SK-N-SH (cell line): ENCODE measurements at regions of chr21 and their contacts with region 1.

Region 1: DNA sequence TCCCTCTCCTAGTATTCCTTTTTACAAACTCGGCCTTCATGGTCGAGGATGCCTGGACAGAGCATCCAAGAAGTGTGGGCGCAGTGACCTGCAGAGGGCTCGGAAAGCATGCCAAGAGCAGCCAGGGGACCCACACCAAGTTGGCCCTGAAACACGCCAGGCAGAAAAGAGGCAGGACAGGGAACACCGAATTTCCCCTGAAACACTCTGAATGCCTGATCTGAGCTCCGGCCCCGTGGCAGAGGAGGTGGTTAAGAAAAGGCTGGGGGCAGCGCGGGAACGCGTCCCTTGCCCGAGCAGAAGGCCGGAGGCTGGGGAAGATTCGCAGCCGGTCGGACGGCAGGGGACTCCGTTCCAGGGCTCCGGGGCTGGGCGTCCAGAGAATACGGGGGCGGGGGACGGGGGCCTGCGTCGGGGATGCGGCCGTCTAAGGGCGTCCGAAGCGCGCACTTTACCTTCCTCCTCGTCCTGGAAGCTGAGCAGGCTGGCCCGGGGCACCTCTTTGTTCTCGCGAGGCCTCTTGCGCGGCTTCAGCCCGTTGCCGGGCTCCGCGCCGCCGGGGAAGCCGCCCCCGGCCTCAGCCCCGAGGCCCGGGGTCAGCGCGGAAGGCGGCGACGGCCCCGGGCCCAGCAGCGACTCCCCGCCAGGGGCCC is 558 bp downstream of the PAXBP1 start:
- DNase-seq: peak; percentile 80
- H3K4me3 ChIP-seq: peak overlapping the region; percentile 76 to 87
- H3K27ac ChIP-seq: peak overlapping the region; percentile 76 to 80
- H3K4me1 ChIP-seq: peaks cover 0 to 18% of the 10 kb centered on the region in 2 experiments; a peak in 3 of 4 replicates
- H3K27me3 ChIP-seq: no peaks in the 10 kb centered on the region
- CTCF ChIP-seq: peak; percentile 11; the same call in 1 of the 2 replicates
- EP300 ChIP-seq: no peak
- RAD21 ChIP-seq: no peak

Region 2: GRCh38 chr21:32702702-32703101 is 68.3 kb before region 1 on chr21:
- CTCF ChIA-PET with region 1: no interaction called
- POLR2A ChIA-PET with region 1: no interaction called
- DNase-seq: no peak
- H3K4me3 ChIP-seq: no peak overlapping the region
- H3K27ac ChIP-seq: peak overlapping the region; percentile 44 to 48; a peak in 3 of 4 replicates
- H3K4me1 ChIP-seq: peaks cover 6 to 13% of the 10 kb centered on the region in 2 experiments; a peak in 3 of 4 replicates
- H3K27me3 ChIP-seq: no peaks in the 10 kb centered on the region
- CTCF ChIP-seq: no peak
- EP300 ChIP-seq: no peak
- RAD21 ChIP-seq: no peak

Region 3: DNA sequence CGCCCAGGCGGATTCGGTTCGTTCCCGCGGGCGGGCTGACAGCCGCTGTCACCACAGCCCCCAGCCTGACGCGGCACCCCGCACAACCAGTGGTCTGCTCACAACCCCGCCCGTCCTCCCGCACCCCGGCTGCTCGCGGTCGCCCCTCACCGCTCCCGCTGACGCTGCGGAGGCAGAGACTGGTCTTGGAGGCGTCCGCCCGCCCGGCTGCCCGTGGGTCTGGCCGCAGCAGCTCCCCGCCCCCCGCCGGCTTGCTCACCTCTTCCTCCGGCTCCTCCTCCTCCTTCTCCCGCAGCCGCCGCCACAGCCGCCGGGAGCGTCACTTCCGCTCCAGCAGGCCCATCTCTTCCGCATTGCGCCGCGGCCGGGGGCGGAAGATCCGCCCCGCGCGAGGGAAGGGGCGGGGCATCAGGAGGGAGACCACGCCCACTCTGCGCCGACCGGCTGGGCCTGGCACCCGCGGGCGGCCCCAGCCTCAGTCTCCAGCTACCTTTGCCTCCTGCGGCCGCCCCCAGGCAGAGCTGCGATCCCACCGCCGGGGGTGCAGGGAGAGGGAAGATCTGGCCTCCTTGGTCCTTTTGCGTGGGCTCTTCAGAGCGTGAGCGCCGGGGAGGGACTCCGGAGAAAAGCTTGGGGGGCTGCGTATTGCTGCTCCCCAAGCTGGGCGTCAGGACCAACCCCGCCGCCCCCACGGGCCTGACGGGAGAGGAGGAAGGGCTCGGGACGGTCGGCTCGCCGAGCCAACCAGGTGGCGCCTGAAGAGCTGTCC is 43.1 kb before region 1 on chr21 and contains the start of gene SYNJ1:
- CTCF ChIA-PET with region 1: interaction called, 8 read pairs
- POLR2A ChIA-PET with region 1: interaction called, 11 read pairs
- DNase-seq: peak; percentile 97
- H3K4me3 ChIP-seq: peak within 1 kb of the TSS; percentile 83 to 94
- H3K27ac ChIP-seq: peak within 1 kb of the TSS; percentile 81 to 91
- H3K4me1 ChIP-seq: peaks cover 0 to 14% of the 10 kb centered on the region in 2 experiments; a peak in 2 of 4 replicates
- H3K27me3 ChIP-seq: no peaks in the 10 kb centered on the region
- CTCF ChIP-seq: no peak
- EP300 ChIP-seq: no peak
- RAD21 ChIP-seq: no peak
- polyA plus RNA-seq, gene SYNJ1: 3.3 TPM in 2 replicates

Region 4: DNA sequence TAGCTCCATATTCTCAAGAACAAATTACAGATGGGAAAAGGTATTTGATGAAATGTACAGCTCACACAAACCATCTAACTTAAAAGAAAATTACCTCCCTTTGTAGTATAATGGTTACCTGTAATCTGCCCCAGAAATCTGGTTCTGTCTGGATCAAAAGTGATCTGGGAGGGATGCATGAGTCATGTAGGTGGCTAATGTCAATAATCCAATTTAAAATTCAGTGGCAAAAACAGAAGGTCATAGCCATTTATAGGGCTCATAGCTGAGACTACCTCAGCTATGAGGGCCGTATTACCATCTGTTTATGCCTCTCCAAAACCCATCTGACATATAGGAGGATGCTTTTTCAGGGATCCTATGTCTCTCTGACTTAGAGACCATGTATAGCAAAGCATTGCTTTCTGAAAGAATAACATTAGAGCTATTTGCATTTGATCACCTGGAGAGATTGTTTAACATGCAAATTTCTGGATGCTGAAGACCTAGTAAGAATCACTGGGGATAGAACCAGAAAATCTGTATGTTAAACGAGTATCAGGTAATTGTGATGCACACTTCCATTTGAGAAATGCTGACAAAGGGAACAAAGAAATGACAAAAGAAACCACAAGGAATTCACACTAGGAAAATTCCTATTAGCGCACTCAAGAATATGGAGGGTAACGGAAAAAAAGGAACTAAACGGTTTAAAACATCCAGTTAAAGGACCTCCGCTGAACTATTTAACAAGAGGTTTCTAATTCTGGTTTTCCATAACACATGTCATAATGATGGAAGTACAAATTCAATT is 17.0 kb before region 1 on chr21:
- CTCF ChIA-PET with region 1: interaction called, 27 read pairs
- POLR2A ChIA-PET with region 1: no interaction called
- DNase-seq: no peak
- H3K4me3 ChIP-seq: no peak overlapping the region
- H3K27ac ChIP-seq: no peak overlapping the region; a peak in 1 of 4 replicates
- H3K4me1 ChIP-seq: no peaks in the 10 kb centered on the region; a peak in 1 of 4 replicates
- H3K27me3 ChIP-seq: no peaks in the 10 kb centered on the region
- CTCF ChIP-seq: no peak
- EP300 ChIP-seq: no peak
- RAD21 ChIP-seq: no peak

Region 5: DNA sequence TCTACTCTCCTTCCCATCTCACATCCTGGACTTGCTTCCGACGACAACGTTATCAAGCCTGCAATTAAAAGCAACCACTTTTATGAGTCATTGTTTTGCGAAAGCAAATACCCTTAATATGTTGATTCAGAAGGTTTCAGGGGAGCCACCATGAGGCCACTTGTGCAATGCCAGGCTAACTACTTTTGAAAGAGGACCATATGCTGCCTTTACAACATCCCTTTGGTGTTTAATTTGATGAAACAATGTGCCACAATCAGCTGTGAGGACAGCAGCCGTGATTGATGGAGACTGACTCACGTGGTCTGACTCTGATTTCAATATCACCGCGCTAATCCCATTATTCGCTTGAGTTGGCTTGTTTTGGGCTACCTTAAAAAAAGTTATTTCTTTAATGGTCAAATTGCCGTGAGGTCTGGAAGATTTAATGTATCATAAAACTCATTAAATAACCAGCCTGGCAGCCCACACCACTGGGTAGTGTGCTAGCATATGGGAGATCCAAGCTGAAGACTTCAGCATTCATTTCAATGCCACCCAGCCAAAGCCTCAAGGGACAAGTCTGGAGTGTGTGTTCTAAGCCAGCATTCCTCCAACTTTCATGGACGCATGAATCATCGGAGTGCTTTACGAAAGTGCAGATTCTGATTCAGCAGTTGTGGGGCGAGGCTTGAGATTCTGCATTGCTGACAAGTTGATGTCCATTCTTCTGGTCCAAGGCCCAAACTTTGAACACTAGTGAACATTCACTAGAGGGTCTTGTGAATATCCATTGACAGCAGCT is 73.8 kb after region 1 on chr21:
- CTCF ChIA-PET with region 1: no interaction called
- POLR2A ChIA-PET with region 1: no interaction called
- DNase-seq: no peak
- H3K4me3 ChIP-seq: no peak overlapping the region
- H3K27ac ChIP-seq: no peak overlapping the region
- H3K4me1 ChIP-seq: no peaks in the 10 kb centered on the region; a peak in 1 of 4 replicates
- H3K27me3 ChIP-seq: peaks cover 76% of the 10 kb centered on the region
- CTCF ChIP-seq: no peak
- EP300 ChIP-seq: no peak
- RAD21 ChIP-seq: no peak